ENCODE measurements at regions of chr16 and their contacts with region 1.

Region 1: DNA sequence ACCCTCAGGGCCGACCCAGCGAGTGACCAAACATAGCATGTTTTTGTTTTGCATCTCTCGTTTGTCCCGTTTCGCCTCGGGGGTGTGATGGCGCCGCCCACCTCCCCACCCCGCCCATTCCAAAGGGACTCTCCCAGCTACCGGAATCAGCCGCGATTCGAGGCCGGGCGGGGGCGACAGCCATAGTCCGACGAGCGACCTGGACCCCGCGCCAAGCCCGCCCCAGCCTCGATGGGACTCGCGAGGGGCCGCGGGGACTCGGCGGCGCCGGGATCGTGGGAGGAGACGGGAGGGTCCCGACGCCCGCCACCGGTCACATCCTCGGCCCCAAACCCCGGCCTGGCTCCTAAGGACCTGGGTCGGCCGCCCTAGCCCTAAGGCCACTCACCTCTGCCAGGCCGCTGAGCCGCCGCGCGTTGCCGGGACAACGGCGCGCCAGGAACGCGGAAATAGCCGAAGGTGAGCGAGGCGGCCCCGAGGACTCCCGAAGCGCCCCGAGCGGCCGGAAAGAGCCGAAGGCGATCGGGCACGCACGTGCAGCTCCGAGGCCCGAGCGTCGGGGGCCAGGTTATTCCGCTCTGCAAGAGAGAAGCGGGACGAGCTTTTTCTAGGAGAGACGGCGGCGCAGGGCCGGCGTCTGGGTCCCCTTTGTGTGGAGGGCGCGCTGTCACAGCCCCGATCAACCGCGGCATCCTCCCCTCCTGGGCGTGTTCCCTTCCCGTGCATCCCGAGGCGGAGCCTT is 1.4 kb downstream of the IFT140 start:
- DNase-seq: peak; percentile 85 to 95 (median 91)
- ATAC-seq: peak; percentile 58
- H3K4me3 ChIP-seq: peak overlapping the region; percentile 60
- H3K4me3 Mint-ChIP-seq: peak overlapping the region; percentile 70 to 95 (median 84)
- H3K27ac ChIP-seq: peak overlapping the region; percentile 75
- H3K27ac Mint-ChIP-seq: peak overlapping the region; percentile 78 to 99 (median 97)
- H3K4me1 ChIP-seq: peaks cover 17 to 34% of the 10 kb centered on the region in 2 donors
- H3K4me1 Mint-ChIP-seq: peaks cover 13 to 30% (median 24%) of the 10 kb centered on the region in 7 donors
- H3K27me3 ChIP-seq: no peaks in the 10 kb centered on the region
- H3K27me3 Mint-ChIP-seq: peaks cover 0 to 4% (median 0%) of the 10 kb centered on the region in 5 donors

Region 2: GRCh38 chr16:1413684-1414531 is 196.5 kb before region 1 on chr16:
- CTCF ChIA-PET with region 1: interaction called, 5 read pairs
- POLR2A ChIA-PET with region 1: no interaction called
- intact Hi-C with region 1: loop called in 1 of 2 experiments (anchors 2 kb)
- DNase-seq: peak; percentile 44 to 77 (median 57)
- ATAC-seq: peak; percentile 66
- H3K4me3 ChIP-seq: peak overlapping the region; percentile 79
- H3K4me3 Mint-ChIP-seq: peak overlapping the region; percentile 75 to 91 (median 85)
- H3K27ac ChIP-seq: peak overlapping the region; percentile 89
- H3K27ac Mint-ChIP-seq: peak overlapping the region; percentile 70 to 92 (median 88)
- H3K4me1 ChIP-seq: peaks cover 0 to 8% of the 10 kb centered on the region in 2 donors
- H3K4me1 Mint-ChIP-seq: peaks cover 0 to 33% (median 26%) of the 10 kb centered on the region in 7 donors
- H3K27me3 ChIP-seq: no peaks in the 10 kb centered on the region
- H3K27me3 Mint-ChIP-seq: no peaks in the 10 kb centered on the region

Region 3: DNA sequence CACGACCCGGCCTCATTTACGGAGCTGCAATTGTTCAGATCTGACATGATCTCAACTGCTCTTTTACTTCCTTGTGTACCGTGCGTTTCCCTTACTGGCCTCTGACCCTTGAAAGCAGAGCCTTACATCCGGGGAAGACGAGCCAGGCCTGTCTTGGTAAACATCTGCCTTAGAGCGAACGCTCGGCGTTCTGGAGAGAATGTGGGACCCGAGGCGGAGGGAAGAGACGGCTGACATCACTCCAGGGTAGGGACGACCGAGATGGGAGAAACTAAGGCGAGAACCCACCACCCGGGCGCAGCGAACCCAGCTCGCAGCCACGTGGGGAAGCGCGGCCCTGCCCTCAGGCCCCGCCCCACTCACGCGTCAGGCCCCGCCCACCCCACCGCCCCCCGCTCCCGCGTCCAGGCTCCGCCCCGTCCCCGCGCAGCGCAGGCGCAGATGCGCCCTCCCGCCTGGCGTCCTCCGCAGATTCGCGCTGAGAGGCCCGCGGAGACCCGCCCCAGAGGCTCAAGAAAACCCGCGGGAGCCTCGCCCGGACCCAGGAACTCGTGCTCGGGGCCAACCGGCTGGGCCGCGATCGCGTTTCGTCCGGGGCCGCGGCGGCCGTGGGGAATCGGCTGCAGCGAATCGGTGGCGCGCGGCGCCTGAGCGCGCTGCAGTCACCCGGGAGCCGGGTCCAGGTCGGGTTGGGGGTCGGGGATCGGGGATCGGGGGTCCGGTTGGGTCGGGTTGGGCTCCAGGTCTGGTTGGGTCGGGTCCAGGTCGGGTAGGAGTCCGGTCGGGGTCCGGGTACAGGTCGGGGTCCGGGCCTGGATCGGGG is 117.3 kb before region 1 on chr16 and contains the start of gene TELO2:
- CTCF ChIA-PET with region 1: no interaction called
- POLR2A ChIA-PET with region 1: no interaction called
- intact Hi-C with region 1: loop called (anchors 1 to 2 kb)
- DNase-seq: peak; percentile 82 to 96 (median 90)
- ATAC-seq: peak; percentile 96
- H3K4me3 ChIP-seq: peak within 1 kb of the TSS; percentile 59
- H3K4me3 Mint-ChIP-seq: peak within 1 kb of the TSS; percentile 83 to 99 (median 94)
- H3K27ac ChIP-seq: peak within 1 kb of the TSS; percentile 88
- H3K27ac Mint-ChIP-seq: peak within 1 kb of the TSS; percentile 97 to 100 (median 99)
- H3K4me1 ChIP-seq: peaks cover 12 to 17% of the 10 kb centered on the region in 2 donors
- H3K4me1 Mint-ChIP-seq: peaks cover 9 to 20% (median 12%) of the 10 kb centered on the region in 7 donors
- H3K27me3 ChIP-seq: no peaks in the 10 kb centered on the region
- H3K27me3 Mint-ChIP-seq: no peaks in the 10 kb centered on the region
- total RNA-seq, gene TELO2: 46.9 to 58.9 (median 50.3) TPM

Region 4: DNA sequence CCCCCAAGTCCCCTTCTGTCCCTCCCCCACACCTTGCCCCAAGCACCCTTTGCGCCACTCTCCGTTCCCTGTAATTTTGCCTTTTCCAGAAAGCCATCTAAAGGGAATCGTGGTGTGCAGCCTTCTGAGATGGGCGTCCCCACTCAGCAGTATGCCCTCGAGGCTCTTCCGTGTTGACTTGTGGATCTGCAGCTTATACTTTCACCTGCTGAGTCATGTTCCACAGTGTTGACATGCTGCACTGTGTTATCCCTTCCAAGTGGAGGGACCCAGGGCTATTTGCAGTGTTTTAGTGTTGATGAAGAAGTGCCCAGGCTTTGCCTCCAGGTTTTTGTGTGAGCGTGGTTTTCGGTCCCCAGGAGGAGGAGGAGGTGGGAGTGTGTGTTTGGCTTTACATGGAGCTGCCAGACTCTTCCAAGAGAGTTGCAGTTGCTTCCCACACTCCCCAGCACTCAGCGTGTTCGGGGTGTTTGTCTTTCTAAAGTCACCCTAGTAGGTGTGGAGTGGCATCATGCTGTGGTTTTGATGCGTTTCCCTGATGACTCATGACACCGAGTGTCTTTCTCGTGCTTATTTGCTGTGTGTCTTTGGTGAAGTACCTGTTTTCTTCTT is 35.6 kb after region 1 on chr16:
- CTCF ChIA-PET with region 1: no interaction called
- POLR2A ChIA-PET with region 1: no interaction called
- intact Hi-C with region 1: loop called in 1 of 2 experiments (anchors 1 kb)
- DNase-seq: peak in 1 of 9 donors; percentile 44
- ATAC-seq: peak; percentile 75
- H3K4me3 ChIP-seq: no peak overlapping the region
- H3K4me3 Mint-ChIP-seq: peak overlapping the region in 2 of 10 donors; percentile 40 to 43
- H3K27ac ChIP-seq: no peak overlapping the region
- H3K27ac Mint-ChIP-seq: peak overlapping the region in 5 of 9 donors; percentile 26 to 85 (median 77)
- H3K4me1 ChIP-seq: peaks cover 0 to 8% of the 10 kb centered on the region in 2 donors
- H3K4me1 Mint-ChIP-seq: peaks cover 12 to 24% (median 21%) of the 10 kb centered on the region in 7 donors
- H3K27me3 ChIP-seq: no peaks in the 10 kb centered on the region
- H3K27me3 Mint-ChIP-seq: no peaks in the 10 kb centered on the region

Region 5: DNA sequence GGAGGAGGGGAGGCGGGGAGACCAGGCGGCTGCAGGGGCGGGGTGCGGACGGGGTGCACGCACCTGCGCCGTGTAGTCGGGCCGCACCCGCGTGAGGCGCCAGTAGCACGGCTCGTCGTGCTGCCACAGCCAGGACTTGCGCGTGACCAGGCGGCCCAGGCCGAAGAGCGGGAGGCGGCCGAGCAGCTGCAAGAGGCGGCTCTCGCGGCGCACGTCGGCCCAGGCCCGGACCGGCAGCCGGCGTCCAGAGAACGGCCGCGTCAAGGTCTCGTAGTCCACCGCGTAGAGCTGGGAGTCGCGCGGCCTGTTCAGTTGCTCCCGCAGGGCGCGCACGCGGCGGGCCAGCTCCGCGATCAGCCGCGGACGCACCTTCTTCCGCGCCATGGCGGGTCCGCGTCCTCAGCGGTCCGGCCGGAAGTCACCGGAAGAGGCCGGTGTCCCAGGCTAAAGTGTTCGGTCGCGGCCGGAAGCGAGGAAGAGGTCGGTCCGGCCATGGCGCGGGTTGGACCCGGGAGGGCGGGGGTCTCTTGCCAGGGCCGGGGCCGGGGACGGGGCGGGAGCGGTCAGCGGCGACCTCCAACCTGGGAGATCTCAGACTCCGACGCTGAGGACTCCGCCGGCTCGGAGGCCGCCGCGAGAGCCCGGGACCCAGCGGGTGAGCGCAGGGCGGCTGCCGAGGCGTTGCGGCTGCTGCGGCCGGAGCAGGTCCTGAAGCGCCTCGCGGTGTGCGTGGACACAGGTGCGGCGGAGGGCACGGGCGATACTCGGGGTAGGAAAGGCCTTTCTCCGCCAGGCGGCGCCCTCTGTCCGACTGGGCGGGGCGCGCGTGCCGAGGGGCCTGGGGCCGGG is 162.5 kb after region 1 on chr16 and contains the starts of genes EME2 and MRPS34:
- CTCF ChIA-PET with region 1: no interaction called
- POLR2A ChIA-PET with region 1: no interaction called
- intact Hi-C with region 1: loop called (anchors 2 kb)
- DNase-seq: peak; percentile 61 to 88 (median 73)
- ATAC-seq: peak; percentile 76
- H3K4me3 ChIP-seq: peak within 1 kb of the TSS; percentile 70
- H3K4me3 Mint-ChIP-seq: peak within 1 kb of the TSS; percentile 91 to 99 (median 98)
- H3K27ac ChIP-seq: peak within 1 kb of the TSS; percentile 85
- H3K27ac Mint-ChIP-seq: peak within 1 kb of the TSS; percentile 86 to 98 (median 95)
- H3K4me1 ChIP-seq: peaks cover 13 to 26% of the 10 kb centered on the region in 2 donors
- H3K4me1 Mint-ChIP-seq: peaks cover 8 to 23% (median 12%) of the 10 kb centered on the region in 7 donors
- H3K27me3 ChIP-seq: no peaks in the 10 kb centered on the region
- H3K27me3 Mint-ChIP-seq: peaks cover 0 to 2% (median 0%) of the 10 kb centered on the region in 5 donors
- total RNA-seq, gene EME2: 32.2 to 47.5 (median 36.8) TPM
- total RNA-seq, gene MRPS34: 41.6 to 115 (median 49.5) TPM

Region 6: DNA sequence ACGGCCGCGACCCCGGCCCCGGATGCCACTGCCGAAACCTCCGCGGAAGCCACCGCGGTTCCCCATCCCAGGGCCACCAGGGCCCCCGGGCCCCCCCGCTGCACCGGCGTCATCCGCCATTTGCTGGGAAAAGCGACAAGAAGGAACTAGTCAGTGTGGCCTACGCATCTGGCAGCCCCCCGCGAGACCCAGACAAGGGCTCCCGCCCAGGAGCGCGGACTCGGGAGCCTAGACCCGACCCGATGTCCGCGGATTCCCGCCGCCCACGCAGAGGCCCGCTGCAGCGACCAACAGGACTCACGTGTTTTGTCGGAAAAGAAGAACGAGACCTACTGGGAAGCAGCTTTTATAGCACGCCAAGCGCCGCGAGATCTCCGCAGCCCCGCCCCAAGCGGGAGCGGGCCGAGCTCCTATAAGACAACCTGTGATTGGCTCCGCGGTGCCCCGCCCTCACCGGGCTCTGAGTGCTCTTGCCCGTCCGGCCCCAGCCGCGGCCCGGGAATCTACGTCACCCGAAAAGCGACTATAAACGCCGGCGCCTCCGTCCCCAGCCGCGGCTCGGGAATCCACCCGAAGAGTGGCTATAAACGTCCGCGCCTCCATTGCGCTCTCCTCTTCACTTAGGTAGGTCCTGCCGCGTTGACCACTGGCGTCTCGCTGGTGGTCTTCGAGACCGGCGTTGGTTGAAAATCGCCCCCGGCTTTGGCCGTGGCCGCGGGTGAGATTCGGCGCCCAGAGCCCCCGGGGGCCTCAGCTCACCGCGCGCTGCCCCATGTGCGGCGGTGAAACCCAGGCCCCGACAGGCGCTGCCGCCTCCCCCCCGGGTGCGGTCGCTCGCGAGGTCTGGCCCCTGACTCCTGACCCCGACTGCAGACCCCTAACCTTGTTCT is 354.3 kb after region 1 on chr16 and contains the start of gene RPS2:
- CTCF ChIA-PET with region 1: no interaction called
- POLR2A ChIA-PET with region 1: no interaction called
- intact Hi-C with region 1: loop called in 1 of 2 experiments (anchors 10 kb)
- DNase-seq: peak; percentile 94 to 99 (median 97)
- ATAC-seq: peak; percentile 97
- H3K4me3 ChIP-seq: peak within 1 kb of the TSS; percentile 81
- H3K4me3 Mint-ChIP-seq: peak within 1 kb of the TSS; percentile 89 to 97 (median 94)
- H3K27ac ChIP-seq: peak within 1 kb of the TSS; percentile 100
- H3K27ac Mint-ChIP-seq: peak within 1 kb of the TSS; percentile 95 to 98 (median 97)
- H3K4me1 ChIP-seq: peaks cover 25 to 41% of the 10 kb centered on the region in 2 donors
- H3K4me1 Mint-ChIP-seq: peaks cover 21 to 49% (median 32%) of the 10 kb centered on the region in 7 donors
- H3K27me3 ChIP-seq: no peaks in the 10 kb centered on the region
- H3K27me3 Mint-ChIP-seq: no peaks in the 10 kb centered on the region
- total RNA-seq, gene RPS2: 2,562 to 3,376 (median 2,918) TPM

Region 7: GRCh38 chr16:2121853-2122252 is 511.4 kb after region 1 on chr16:
- CTCF ChIA-PET with region 1: no interaction called
- POLR2A ChIA-PET with region 1: no interaction called
- intact Hi-C with region 1: no loop called
- DNase-seq: no peak
- ATAC-seq: peak; percentile 14
- H3K4me3 ChIP-seq: no peak overlapping the region
- H3K4me3 Mint-ChIP-seq: no peak overlapping the region
- H3K27ac ChIP-seq: no peak overlapping the region
- H3K27ac Mint-ChIP-seq: no peak overlapping the region
- H3K4me1 ChIP-seq: no peaks in the 10 kb centered on the region
- H3K4me1 Mint-ChIP-seq: peaks cover 0 to 28% (median 16%) of the 10 kb centered on the region in 7 donors
- H3K27me3 ChIP-seq: no peaks in the 10 kb centered on the region
- H3K27me3 Mint-ChIP-seq: no peaks in the 10 kb centered on the region

Measured in naive thymus-derived CD4-positive, alpha-beta T cell (primary cell).